Activated CD4-positive, alpha-beta T cell treated with anti-CD3 and anti-CD28 coated beads for 36 hours (primary cell): ENCODE measurements at regions of chr6 and their contacts with region 1.

Region 1: GRCh38 chr6:89145787-89146646 is at the start of gene PM20D2:
- DNase-seq: peak; percentile 79
- ATAC-seq: peak; percentile 70
- H3K4me3 Mint-ChIP-seq: peak within 1 kb of the TSS; percentile 80
- H3K27ac Mint-ChIP-seq: peak within 1 kb of the TSS; percentile 97
- H3K4me1 Mint-ChIP-seq: peaks cover 38% of the 10 kb centered on the region
- H3K27me3 Mint-ChIP-seq: no peaks in the 10 kb centered on the region
- total RNA-seq, gene PM20D2: 14.1 to 17.4 TPM

Region 2: DNA sequence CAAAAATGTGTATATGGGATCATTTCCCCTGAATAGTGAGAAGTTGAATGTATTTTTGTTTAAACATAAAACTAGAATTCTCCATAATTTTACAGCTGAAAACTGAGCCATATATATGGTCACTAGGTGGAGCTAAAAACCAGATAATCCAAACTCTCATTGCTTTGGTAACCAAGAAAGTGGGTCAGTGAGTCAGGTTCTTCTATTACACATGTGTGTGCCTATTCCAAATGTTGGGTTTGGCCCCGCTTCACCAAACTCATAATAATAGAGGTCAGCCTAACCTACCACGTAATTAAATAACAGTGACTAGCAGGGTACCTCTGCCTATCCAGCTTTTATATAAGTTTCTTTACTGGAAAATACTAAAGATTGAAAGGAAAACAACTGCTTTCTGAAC is 163.3 kb before region 1 on chr6:
- CTCF ChIA-PET with region 1: interaction called, 17 read pairs
- POLR2A ChIA-PET with region 1: interaction called, 3 read pairs
- intact Hi-C with region 1: loop called in 1 of 2 experiments (anchors 1 kb)
- DNase-seq: peak; percentile 45
- ATAC-seq: peak; percentile 96
- H3K4me3 Mint-ChIP-seq: no peak overlapping the region
- H3K27ac Mint-ChIP-seq: no peak overlapping the region
- H3K4me1 Mint-ChIP-seq: no peaks in the 10 kb centered on the region
- H3K27me3 Mint-ChIP-seq: peaks cover 3% of the 10 kb centered on the region

Region 3: GRCh38 chr6:89117211-89118108 is 28.6 kb before region 1 on chr6 and contains the start of gene SRSF12:
- CTCF ChIA-PET with region 1: interaction called, 5 read pairs
- POLR2A ChIA-PET with region 1: interaction called, 8 read pairs
- intact Hi-C with region 1: loop called (anchors 1 to 2 kb)
- DNase-seq: peak; percentile 53
- ATAC-seq: peak; percentile 89
- H3K4me3 Mint-ChIP-seq: peak within 1 kb of the TSS; percentile 74
- H3K27ac Mint-ChIP-seq: no peak within 1 kb of the TSS
- H3K4me1 Mint-ChIP-seq: peaks cover 6% of the 10 kb centered on the region
- H3K27me3 Mint-ChIP-seq: peaks cover 10% of the 10 kb centered on the region
- total RNA-seq, gene SRSF12: 0.26 to 0.27 TPM

Region 4: GRCh38 chr6:89297695-89298351 is 151.8 kb after region 1 on chr6:
- CTCF ChIA-PET with region 1: interaction called, 3 read pairs
- POLR2A ChIA-PET with region 1: interaction called, 4 read pairs
- intact Hi-C with region 1: loop called in 1 of 2 experiments (anchors 2 kb)
- DNase-seq: peak; percentile 85
- ATAC-seq: peak; percentile 77
- H3K4me3 Mint-ChIP-seq: peak overlapping the region; percentile 35
- H3K27ac Mint-ChIP-seq: peak overlapping the region; percentile 72
- H3K4me1 Mint-ChIP-seq: peaks cover 21% of the 10 kb centered on the region
- H3K27me3 Mint-ChIP-seq: no peaks in the 10 kb centered on the region

Region 5: GRCh38 chr6:89829591-89830385 is 683.8 kb after region 1 on chr6 and contains the start of gene CASP8AP2:
- CTCF ChIA-PET with region 1: no interaction called
- POLR2A ChIA-PET with region 1: no interaction called
- intact Hi-C with region 1: loop called in 1 of 2 experiments (anchors 10 kb)
- DNase-seq: peak; percentile 98
- ATAC-seq: peak; percentile 96
- H3K4me3 Mint-ChIP-seq: peak within 1 kb of the TSS; percentile 97
- H3K27ac Mint-ChIP-seq: peak within 1 kb of the TSS; percentile 92
- H3K4me1 Mint-ChIP-seq: peaks cover 33% of the 10 kb centered on the region
- H3K27me3 Mint-ChIP-seq: no peaks in the 10 kb centered on the region
- total RNA-seq, gene CASP8AP2: 34.0 to 36.5 TPM